HepG2 (cell line): ENCODE measurements at regions of chr2 and their contacts with region 1.

Region 1: DNA sequence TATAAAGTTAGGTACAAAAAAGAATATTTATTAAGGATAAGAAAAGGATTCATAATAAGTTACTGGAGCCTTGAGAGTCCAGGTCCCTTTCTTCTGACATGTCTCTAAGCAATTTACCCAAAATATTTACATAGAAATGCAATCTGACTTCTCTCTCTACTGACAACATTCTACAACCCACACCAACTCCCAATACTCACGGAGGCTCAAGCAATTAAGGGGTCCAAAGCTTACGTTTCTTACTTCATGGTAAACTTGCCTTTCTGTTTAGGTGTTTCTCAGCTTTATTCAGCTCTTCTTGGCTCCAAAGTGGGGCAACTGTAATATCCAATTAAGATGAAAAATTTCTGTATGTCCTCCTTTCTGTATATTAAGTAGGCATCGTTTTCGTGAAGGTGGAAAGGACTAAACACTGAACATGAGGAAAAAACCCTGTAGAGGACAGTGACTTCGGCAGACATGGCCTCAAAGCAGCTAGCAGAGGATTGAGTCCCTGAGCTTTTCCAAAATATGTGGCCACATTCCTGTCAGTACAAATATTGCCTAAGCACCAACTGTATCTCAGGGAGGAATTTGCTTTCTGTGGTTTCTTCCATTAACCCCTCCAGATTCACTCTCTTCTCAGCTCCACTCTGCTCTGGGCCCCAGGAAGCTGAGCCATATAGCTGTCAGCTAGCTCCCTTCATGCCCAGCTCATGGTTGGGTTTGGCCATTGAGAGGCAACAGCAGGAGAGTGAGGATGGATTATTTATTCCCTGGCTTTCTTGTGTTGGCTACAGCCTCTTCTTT is 67.9 kb upstream of the GLS start:
- DNase-seq: peak; percentile 90
- ATAC-seq: peak; percentile 67
- H3K4me3 ChIP-seq: peak overlapping the region; percentile 55 to 68 (median 65)
- H3K27ac ChIP-seq: peak overlapping the region; percentile 90
- H3K4me1 ChIP-seq: peaks cover 60% of the 10 kb centered on the region
- H3K27me3 ChIP-seq: no peaks in the 10 kb centered on the region
- CTCF ChIP-seq: no peak
- EP300 ChIP-seq: peak; percentile 41 to 85; a peak in 3 of 4 replicates
- POLR2A ChIP-seq: peak; percentile 51 to 92; a peak in 3 of 4 replicates
- RAD21 ChIP-seq: peak; percentile 43

Region 2: DNA sequence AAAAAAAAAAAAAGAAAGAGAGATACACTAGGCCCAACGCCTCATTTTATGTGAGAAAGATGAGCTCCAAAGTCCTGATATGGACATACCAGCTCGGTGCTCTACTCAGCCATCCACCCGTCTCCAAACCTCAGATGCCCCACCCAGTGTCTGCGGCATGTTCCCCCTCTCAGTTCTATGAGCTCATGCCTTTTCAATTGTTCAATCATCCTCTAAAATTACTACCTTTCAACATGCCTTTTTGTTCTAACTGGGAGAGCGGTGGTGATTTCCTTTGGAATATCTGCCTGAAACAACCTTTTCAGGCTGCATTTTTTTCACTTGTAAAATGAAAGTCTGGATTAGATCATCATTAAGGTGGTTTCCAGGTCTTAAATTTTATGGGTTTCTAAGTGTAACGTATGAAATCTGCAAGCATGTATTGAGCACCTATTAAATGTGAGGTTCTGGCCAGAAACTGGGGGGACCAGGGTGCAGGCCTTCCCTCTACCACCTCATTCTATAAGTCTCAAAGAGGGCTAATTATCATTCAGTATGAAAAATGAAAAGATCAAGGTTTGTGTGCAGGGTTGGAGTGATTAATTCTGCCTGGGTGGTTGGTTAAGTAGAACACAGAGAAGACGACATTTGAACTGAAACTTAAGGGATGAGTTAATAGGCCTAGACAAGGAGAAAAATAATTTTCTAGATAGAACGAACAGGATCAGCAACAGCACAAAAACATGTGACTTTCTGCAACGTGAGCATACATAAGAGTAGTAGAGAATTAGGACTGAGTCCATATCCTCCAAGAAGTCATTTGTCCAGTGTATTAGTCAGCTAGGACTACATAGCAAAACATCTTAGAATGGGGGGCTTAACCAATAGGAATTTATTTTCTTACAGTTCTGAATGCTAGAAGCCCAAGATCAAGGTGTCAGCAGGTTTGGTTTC is 19.5 kb before region 1 on chr2:
- CTCF ChIA-PET with region 1: no interaction called
- POLR2A ChIA-PET with region 1: interaction called, 10 read pairs
- in situ Hi-C with region 1: no loop called
- intact Hi-C with region 1: no loop called
- DNase-seq: no peak
- ATAC-seq: no peak
- H3K4me3 ChIP-seq: no peak overlapping the region
- H3K27ac ChIP-seq: no peak overlapping the region
- H3K4me1 ChIP-seq: peaks cover 27% of the 10 kb centered on the region
- H3K27me3 ChIP-seq: no peaks in the 10 kb centered on the region
- CTCF ChIP-seq: no peak
- EP300 ChIP-seq: no peak
- POLR2A ChIP-seq: no peak
- RAD21 ChIP-seq: no peak

Region 3: DNA sequence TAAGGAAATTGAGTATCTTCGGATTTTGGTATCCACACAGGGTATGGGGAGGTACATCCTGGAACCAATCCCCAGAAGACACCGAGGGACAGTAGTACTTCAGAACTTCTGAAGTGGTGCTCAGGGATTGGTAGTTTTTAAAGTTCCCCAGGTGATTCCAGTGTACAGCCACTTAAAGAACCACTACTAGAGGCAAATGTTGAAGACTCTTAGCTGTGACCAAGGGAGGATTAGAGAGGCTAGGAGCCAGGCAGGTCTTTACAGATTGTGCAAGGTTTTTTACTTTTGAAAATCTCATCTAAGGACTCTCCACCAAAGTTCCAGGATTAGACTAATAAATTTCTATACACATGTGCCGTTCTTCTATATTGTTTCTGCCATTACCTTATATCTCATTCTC is 15.0 kb after region 1 on chr2:
- CTCF ChIA-PET with region 1: no interaction called
- POLR2A ChIA-PET with region 1: no interaction called
- in situ Hi-C with region 1: no loop called
- intact Hi-C with region 1: no loop called
- DNase-seq: no peak
- ATAC-seq: no peak
- H3K4me3 ChIP-seq: no peak overlapping the region
- H3K27ac ChIP-seq: no peak overlapping the region
- H3K4me1 ChIP-seq: no peaks in the 10 kb centered on the region
- H3K27me3 ChIP-seq: no peaks in the 10 kb centered on the region
- CTCF ChIP-seq: no peak
- EP300 ChIP-seq: no peak
- POLR2A ChIP-seq: no peak
- RAD21 ChIP-seq: no peak

Region 4: GRCh38 chr2:190847504-190848081 is 34.9 kb after region 1 on chr2:
- CTCF ChIA-PET with region 1: no interaction called
- POLR2A ChIA-PET with region 1: interaction called, 7 read pairs
- in situ Hi-C with region 1: no loop called
- intact Hi-C with region 1: loop called (anchors 2 kb)
- DNase-seq: no peak
- ATAC-seq: no peak
- H3K4me3 ChIP-seq: no peak overlapping the region
- H3K27ac ChIP-seq: no peak overlapping the region
- H3K4me1 ChIP-seq: peaks cover 9% of the 10 kb centered on the region
- H3K27me3 ChIP-seq: no peaks in the 10 kb centered on the region
- CTCF ChIP-seq: no peak
- EP300 ChIP-seq: no peak
- POLR2A ChIP-seq: no peak
- RAD21 ChIP-seq: no peak